HEK293 (cell line): ENCODE measurements at regions of chr1 and their contacts with region 1.

Region 1: GRCh38 chr1:179121159-179121938 is 39.5 kb downstream of the TOR3A start:
- H3K4me3 ChIP-seq: no peak overlapping the region
- H3K27ac ChIP-seq: no peak overlapping the region
- H3K4me1 ChIP-seq: no peaks in the 10 kb centered on the region
- CTCF ChIP-seq: 0 out of 2 replicates have a peak, but pooled peaks have one; percentile 30

Region 2: DNA sequence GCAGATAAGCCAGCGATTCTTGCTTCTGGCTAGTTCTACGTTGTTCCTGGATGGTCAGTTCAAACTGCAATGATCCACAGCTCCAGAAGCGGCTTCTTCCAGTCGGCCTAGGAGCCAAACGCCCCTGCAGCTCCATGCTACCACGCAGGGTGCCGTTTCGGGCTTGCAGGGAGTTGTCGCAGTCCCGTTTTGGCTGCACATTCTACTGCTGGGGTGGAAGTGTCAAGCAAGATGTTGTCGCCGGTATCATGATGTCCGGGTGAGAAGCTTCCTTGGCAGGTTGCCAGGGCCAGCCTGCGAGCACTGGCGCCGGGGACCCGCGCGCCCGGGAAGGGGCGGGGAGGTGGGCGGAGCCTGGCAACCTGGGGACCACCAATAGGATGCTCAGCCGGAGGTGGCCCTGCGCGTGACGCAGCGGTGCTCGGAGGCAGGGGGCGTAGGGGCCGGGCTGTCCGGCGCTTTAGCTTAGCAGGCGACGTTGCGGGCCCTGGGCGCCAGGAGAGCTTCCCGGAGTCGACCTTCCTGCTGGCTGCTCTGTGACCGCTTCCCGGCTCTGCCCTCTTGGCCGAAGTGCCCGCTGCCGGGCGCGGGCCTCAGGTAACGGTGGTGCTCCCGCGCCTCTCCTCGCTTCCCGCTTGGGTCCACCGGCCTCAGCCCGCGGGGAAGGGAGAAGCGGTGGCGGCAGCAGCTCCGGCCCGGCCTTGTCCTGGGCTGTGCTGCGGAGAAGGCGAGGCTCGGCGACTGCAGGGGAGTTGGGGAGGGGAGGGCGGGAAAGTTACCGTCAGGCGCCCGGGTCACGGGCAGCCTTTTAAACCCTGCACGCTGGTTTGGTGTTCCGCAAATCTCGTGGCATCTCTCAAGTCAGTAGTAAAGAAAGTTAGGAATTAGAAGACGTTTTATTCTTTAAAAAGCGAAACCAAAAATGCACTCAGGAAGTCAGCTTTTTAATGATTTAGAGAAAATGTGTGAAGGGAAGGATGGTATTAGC is 172.3 kb after region 1 on chr1 and contains the start of gene SOAT1:
- CTCF ChIA-PET with region 1: interaction called, 11 read pairs
- POLR2A ChIA-PET with region 1: no interaction called
- H3K4me3 ChIP-seq: peak within 1 kb of the TSS; percentile 81
- H3K27ac ChIP-seq: peak within 1 kb of the TSS; percentile 76
- H3K4me1 ChIP-seq: peaks cover 6% of the 10 kb centered on the region; the same call in 1 of the 2 replicates
- CTCF ChIP-seq: peak; percentile 72

Region 3: DNA sequence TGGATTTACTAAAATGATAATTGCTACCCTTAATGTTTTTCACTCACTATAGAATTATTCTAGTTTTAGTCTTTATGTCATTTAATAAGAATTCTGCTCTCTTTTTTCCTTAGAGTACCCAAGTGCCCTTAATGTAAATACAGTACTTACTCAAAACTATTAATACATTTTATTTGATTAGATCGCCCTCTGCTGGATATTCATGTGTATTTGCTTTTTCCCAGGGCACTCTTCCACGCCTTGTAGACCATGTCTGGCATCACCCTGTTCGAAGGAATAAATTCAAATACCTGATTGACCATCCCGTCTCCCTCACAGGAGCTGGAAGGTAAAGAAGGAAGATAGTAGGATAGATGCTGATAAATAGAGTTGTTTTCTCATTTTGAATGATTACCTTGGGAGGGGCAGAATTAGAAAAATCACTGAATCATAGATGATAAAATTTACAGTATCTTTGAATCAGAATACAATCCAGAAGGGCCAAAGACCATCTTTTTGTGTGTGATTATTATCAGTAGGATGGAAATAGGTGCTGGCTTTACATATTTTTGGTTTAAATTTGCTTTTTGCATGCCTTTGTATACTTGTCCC is 248.5 kb after region 1 on chr1:
- CTCF ChIA-PET with region 1: interaction called, 37 read pairs
- POLR2A ChIA-PET with region 1: no interaction called
- H3K4me3 ChIP-seq: no peak overlapping the region
- H3K27ac ChIP-seq: no peak overlapping the region
- H3K4me1 ChIP-seq: no peaks in the 10 kb centered on the region
- CTCF ChIP-seq: no peak